ENCODE measurements at regions of chr1 and their contacts with region 1.

Region 1: GRCh38 chr1:27349784-27350662 is 8.2 kb downstream of the SYTL1 start:
- DNase-seq: no peak
- ATAC-seq: peak; percentile 65
- H3K4me3 ChIP-seq: peak overlapping the region in 3 of 5 experiments; percentile 24 to 41 (median 27)
- H3K4me3 Mint-ChIP-seq: peak overlapping the region; percentile 50
- H3K27ac ChIP-seq: no peak overlapping the region
- H3K27ac Mint-ChIP-seq: no peak overlapping the region
- H3K4me1 ChIP-seq: peaks cover 6 to 13% of the 10 kb centered on the region in 2 donors
- H3K4me1 Mint-ChIP-seq: peaks cover 18% of the 10 kb centered on the region
- H3K27me3 ChIP-seq: no peaks in the 10 kb centered on the region
- H3K27me3 Mint-ChIP-seq: no peaks in the 10 kb centered on the region
- CTCF ChIP-seq: no peak

Region 2: GRCh38 chr1:27077968-27078367 is 272.1 kb before region 1 on chr1:
- CTCF ChIA-PET with region 1: interaction called, 4 read pairs
- POLR2A ChIA-PET with region 1: interaction called, 10 read pairs
- intact Hi-C with region 1: no loop called
- DNase-seq: no peak
- ATAC-seq: no peak
- H3K4me3 ChIP-seq: no peak overlapping the region
- H3K4me3 Mint-ChIP-seq: no peak overlapping the region
- H3K27ac ChIP-seq: no peak overlapping the region
- H3K27ac Mint-ChIP-seq: no peak overlapping the region
- H3K4me1 ChIP-seq: no peaks in the 10 kb centered on the region
- H3K4me1 Mint-ChIP-seq: no peaks in the 10 kb centered on the region
- H3K27me3 ChIP-seq: no peaks in the 10 kb centered on the region
- H3K27me3 Mint-ChIP-seq: no peaks in the 10 kb centered on the region
- CTCF ChIP-seq: no peak